ENCODE measurements at regions of chr10 and their contacts with region 1.

Region 1: DNA sequence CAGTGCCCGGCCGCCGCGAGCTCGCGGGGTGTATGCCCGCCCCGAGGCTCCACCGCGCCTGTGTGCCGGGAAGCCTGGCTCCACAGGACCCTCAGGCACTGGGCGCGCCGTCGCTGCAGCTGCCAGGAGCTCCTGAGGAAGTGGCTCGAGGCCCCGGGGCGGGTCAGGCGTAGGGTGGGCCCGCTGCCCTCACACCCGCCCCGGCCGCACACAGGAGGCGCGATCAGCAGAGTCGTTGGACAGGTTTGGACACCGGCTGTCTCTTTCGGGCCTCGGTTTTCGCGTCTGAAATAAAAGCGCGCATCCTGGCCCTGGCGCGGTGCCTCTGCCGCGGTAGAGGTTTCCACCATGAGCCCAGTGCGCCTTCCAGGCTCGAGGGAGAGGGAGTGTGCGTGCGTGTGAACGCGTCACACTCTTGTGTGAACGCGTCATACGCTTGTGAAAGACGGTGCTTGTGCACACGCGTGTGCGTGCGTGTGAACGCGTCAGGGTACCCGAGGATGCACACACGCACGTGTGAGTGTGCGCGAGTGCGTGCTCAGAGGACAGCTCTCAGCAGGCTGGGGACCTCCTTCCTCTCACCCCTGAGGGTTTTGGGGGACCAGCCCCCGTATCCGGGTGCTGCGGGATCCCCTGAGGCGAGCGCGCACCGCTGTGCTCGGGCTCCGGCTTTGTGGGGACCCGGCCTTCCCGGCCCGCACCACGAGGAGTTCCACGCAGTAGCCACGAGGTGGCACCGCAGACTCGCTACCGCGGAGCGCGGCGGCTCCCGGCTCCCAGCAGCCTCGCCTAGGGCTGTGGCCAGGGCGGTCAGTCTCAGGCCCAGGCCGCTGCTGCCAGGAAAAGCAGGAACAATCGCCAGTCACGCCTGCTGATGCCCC is 83.8 kb downstream of the BMS1 start:
- DNase-seq: peak; percentile 47
- ATAC-seq: peak; percentile 100
- H3K4me3 ChIP-seq: no peak overlapping the region
- H3K27ac ChIP-seq: no peak overlapping the region
- H3K4me1 ChIP-seq: peaks cover 0 to 12% of the 10 kb centered on the region in 2 experiments; a peak in 3 of 4 replicates
- H3K27me3 ChIP-seq: peaks cover under 1% of the 10 kb centered on the region
- CTCF ChIP-seq: peak; percentile 66 to 81 (median 72)
- POLR2A ChIP-seq: no peak
- RAD21 ChIP-seq: peak; percentile 91

Region 2: DNA sequence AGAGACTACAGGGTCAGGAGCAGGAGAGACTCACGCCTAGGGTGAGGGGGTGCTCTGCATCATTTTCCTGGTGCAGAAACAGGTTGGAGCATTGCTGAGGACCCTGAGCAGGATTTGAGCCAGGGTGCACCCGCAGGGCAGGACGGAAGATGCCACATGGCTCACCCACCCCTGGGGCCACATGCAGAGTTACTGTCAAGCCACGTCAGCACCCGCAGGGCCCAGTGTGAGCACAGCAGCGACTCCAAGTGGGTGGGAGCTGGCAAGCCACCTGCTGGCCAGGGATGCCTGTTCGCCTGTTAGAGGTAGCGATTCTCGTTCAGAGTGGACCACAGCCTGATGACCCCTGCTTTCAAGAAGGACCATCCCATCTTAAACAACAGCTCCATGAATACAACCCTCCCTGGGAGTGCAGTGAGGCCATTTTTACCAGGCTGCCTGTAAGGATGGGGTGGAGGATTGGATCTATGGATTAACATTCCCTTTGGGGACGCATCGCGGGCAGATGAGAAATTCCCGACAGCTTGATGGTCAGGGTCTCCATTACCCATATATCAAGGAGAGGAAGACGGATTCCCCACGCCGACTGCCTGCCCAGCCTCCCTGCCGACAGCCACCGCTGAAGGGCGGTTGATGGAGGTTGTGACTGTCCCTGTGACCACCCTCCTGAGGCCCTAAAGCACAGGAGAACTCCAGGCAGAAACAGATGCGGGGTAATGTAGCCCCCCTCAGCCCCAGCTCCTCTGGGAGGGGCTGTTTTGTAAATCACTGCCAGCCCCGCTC is 109.4 kb after region 1 on chr10:
- CTCF ChIA-PET with region 1: no interaction called
- POLR2A ChIA-PET with region 1: no interaction called
- RAD21 ChIA-PET with region 1: no interaction called
- intact Hi-C with region 1: loop called (anchors 1 kb)
- DNase-seq: peak; percentile 15
- ATAC-seq: peak; percentile 96
- H3K4me3 ChIP-seq: no peak overlapping the region
- H3K27ac ChIP-seq: no peak overlapping the region
- H3K4me1 ChIP-seq: peaks cover 0 to 6% of the 10 kb centered on the region in 2 experiments; a peak in 1 of 4 replicates
- H3K27me3 ChIP-seq: no peaks in the 10 kb centered on the region
- CTCF ChIP-seq: peak; percentile 52 to 62 (median 60); a peak in 5 of 6 replicates
- POLR2A ChIP-seq: no peak
- RAD21 ChIP-seq: peak; percentile 67

Region 3: GRCh38 chr10:43078987-43079275 is 212.6 kb after region 1 on chr10:
- CTCF ChIA-PET with region 1: interaction called, 8 read pairs
- POLR2A ChIA-PET with region 1: no interaction called
- RAD21 ChIA-PET with region 1: interaction called, 3 read pairs
- intact Hi-C with region 1: loop called (anchors 1 kb)
- DNase-seq: no peak
- ATAC-seq: peak; percentile 42
- H3K4me3 ChIP-seq: no peak overlapping the region
- H3K27ac ChIP-seq: no peak overlapping the region
- H3K4me1 ChIP-seq: peaks cover 12 to 19% of the 10 kb centered on the region in 2 experiments; a peak in 2 of 4 replicates
- H3K27me3 ChIP-seq: no peaks in the 10 kb centered on the region
- CTCF ChIP-seq: peak; percentile 57 to 84 (median 80); a peak in 5 of 6 replicates
- POLR2A ChIP-seq: no peak
- RAD21 ChIP-seq: peak; percentile 74

Region 4: GRCh38 chr10:43461950-43462349 is 595.6 kb after region 1 on chr10:
- CTCF ChIA-PET with region 1: no interaction called
- POLR2A ChIA-PET with region 1: no interaction called
- RAD21 ChIA-PET with region 1: no interaction called
- intact Hi-C with region 1: no loop called
- DNase-seq: peak; percentile 80
- ATAC-seq: peak; percentile 85
- H3K4me3 ChIP-seq: no peak overlapping the region
- H3K27ac ChIP-seq: no peak overlapping the region
- H3K4me1 ChIP-seq: no peaks in the 10 kb centered on the region; a peak in 1 of 4 replicates
- H3K27me3 ChIP-seq: no peaks in the 10 kb centered on the region
- CTCF ChIP-seq: peak; percentile 62 to 78 (median 76)
- POLR2A ChIP-seq: no peak
- RAD21 ChIP-seq: peak; percentile 84

Measured in HCT116 (cell line).